ENCODE measurements at regions of chr3 and their contacts with region 1.

Region 1: DNA sequence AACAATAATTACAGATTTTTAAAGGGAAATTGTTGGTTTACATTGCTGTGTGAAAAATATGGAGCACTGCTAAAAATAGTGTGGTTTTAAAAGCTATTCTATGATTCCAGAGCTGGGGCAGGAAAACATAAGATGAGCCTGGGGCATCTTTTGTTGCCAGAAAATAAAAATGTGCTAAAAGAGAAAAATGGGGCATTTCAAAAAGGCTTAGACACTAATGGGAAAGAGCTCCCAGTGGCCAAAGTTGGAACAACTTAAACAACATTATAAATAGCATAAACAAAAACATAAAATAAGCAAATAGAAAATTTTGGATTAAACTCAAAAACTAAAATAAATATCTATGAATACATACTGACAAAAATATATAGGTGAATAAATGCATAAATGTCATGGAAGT is 478.9 kb downstream of the NLGN1 start:
- DNase-seq: no peak
- H3K4me3 ChIP-seq: no peak overlapping the region
- H3K27ac ChIP-seq: no peak overlapping the region
- H3K4me1 ChIP-seq: no peaks in the 10 kb centered on the region
- H3K27me3 ChIP-seq: no peaks in the 10 kb centered on the region
- CTCF ChIP-seq: peak; percentile 36; the same call in 1 of the 2 replicates

Region 2: DNA sequence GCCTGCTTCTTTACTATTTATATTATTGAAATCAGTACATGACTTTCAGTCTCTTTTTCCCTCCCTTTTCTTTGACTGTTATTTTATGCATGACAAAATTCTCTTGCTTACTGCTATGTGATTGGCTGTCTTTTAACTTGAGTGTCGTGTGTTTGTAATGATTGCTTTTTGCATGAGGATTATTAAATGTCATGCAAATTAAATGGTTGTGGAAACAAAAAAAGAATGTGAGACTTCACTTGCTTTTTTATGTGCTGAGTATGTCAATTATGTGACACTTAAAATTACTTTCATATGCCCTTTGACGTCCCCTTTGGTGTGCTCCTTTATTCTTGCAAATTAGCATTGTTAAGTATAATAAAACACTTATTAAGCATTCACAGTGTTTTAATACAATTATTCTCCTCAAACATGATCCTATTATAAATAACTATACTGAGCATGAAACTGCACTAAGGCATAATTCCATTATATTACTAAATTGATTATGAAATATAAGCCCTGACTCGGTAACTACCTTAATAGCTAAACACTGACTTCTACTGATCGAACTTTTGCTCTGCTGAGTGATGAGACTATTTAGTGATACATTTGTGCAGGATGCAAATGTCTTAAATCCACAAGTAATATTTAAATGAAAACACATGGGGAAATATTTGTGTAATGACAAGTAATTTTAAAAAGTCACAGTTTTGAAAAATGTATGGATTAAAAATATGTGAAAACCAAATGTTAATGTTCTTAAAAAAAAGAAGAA is 77.2 kb before region 1 on chr3:
- CTCF ChIA-PET with region 1: no interaction called
- POLR2A ChIA-PET with region 1: no interaction called
- intact Hi-C with region 1: no loop called
- DNase-seq: no peak
- H3K4me3 ChIP-seq: no peak overlapping the region
- H3K27ac ChIP-seq: no peak overlapping the region
- H3K4me1 ChIP-seq: no peaks in the 10 kb centered on the region
- H3K27me3 ChIP-seq: no peaks in the 10 kb centered on the region
- CTCF ChIP-seq: no peak

Region 3: GRCh38 chr3:173932624-173933023 is 56.1 kb after region 1 on chr3:
- CTCF ChIA-PET with region 1: no interaction called
- POLR2A ChIA-PET with region 1: interaction called, 20 read pairs
- intact Hi-C with region 1: no loop called
- DNase-seq: peak; percentile 79
- H3K4me3 ChIP-seq: no peak overlapping the region
- H3K27ac ChIP-seq: no peak overlapping the region
- H3K4me1 ChIP-seq: peaks cover 24% of the 10 kb centered on the region
- H3K27me3 ChIP-seq: no peaks in the 10 kb centered on the region
- CTCF ChIP-seq: no peak

Measured in A673 (cell line).